ENCODE measurements at regions of chr13 and their contacts with region 1.

Region 1: GRCh38 chr13:95191821-95192563 is 109.3 kb downstream of the ABCC4 start:
- DNase-seq: peak; percentile 77
- ATAC-seq: peak; percentile 87 to 90

Region 2: DNA sequence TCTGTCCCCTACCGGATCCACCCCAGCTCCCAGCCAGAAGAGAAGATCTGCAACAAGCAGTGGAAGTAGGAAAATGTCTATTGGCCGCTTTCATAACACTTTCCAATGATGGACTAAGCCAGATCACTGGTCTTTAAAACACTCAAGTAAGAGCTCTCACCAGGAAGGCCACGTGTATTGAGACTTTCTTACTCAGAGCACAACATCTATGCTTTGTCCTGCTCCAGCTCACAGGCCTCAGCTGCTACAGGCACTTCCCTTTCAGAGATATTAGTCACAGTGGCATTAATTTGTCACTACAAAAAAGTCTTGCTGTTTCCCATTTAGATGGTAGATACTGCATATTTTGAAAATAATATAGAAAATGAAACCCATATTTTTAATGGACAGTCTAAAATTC is 54.9 kb before region 1 on chr13:
- intact Hi-C with region 1: no loop called
- DNase-seq: no peak
- ATAC-seq: no peak

Region 3: DNA sequence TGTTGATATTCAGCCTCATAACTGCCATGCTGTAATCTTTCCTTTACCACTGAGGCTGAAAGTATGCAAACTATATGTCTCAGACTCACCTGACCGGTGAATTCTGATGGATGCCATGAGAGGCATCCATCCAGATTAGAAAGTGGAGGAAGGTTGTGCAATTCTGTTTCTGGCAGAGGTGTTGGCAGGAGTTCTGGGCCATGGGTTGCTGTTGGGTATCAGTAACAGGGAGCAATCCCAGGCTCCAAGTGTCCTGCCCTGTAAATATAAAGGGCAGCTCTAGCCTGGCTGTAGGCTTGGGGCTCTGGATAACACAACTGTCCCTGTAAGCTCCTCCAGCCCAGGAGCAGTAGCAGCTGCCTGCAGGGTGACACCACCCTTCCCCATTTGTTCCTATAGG is 186.6 kb after region 1 on chr13:
- intact Hi-C with region 1: loop called (anchors 2 to 5 kb)
- DNase-seq: no peak
- ATAC-seq: peak in 1 of 2 donors; percentile 53

Region 4: GRCh38 chr13:95403828-95404522 is 212.0 kb after region 1 on chr13:
- intact Hi-C with region 1: loop called (anchors 2 to 5 kb)
- DNase-seq: peak; percentile 80
- ATAC-seq: peak; percentile 93 to 95

Region 5: DNA sequence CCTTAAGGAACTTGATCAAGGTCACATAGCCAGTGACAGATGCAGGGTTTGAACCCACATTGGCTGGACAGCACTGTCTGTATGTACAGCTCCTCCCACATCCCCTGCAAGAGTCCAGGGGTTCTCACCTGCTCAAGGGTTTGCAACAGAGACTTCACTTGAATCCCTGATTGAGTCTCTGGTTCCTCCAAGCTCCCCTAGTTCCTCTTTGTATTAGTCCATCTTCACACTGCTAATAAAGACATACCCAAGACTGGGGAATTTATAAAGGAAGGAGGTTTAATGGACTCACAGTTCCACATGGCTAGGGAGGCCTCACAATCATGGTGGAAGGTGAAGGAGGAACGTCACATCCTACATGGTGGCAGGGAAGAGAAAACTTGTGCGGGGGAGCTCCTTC is 287.7 kb after region 1 on chr13:
- intact Hi-C with region 1: loop called in 1 of 2 experiments (anchors 5 kb)
- DNase-seq: no peak
- ATAC-seq: no peak

Measured in left cardiac atrium (tissue), 4 donors.